BJ (cell line): ENCODE measurements at regions of chr9 and their contacts with region 1.

Region 1: GRCh38 chr9:35882263-35882848 is 12.2 kb upstream of the OR13J1 start:
- DNase-seq: peak; percentile 20
- H3K4me3 ChIP-seq: no peak overlapping the region
- H3K27me3 ChIP-seq: no peaks in the 10 kb centered on the region
- CTCF ChIP-seq: peak; percentile 99

Region 2: GRCh38 chr9:35790385-35791296 is 91.7 kb before region 1 on chr9:
- CTCF ChIA-PET with region 1: interaction called, 92 read pairs
- POLR2A ChIA-PET with region 1: no interaction called
- DNase-seq: peak; percentile 18
- H3K4me3 ChIP-seq: peak overlapping the region; percentile 61
- H3K27me3 ChIP-seq: peaks cover 2% of the 10 kb centered on the region; the same call in 1 of the 2 replicates
- CTCF ChIP-seq: peak; percentile 85

Region 3: GRCh38 chr9:35859310-35859989 is 22.9 kb before region 1 on chr9:
- CTCF ChIA-PET with region 1: interaction called, 21 read pairs
- POLR2A ChIA-PET with region 1: no interaction called
- DNase-seq: no peak
- H3K4me3 ChIP-seq: no peak overlapping the region
- H3K27me3 ChIP-seq: peaks cover 12% of the 10 kb centered on the region
- CTCF ChIP-seq: no peak

Region 4: DNA sequence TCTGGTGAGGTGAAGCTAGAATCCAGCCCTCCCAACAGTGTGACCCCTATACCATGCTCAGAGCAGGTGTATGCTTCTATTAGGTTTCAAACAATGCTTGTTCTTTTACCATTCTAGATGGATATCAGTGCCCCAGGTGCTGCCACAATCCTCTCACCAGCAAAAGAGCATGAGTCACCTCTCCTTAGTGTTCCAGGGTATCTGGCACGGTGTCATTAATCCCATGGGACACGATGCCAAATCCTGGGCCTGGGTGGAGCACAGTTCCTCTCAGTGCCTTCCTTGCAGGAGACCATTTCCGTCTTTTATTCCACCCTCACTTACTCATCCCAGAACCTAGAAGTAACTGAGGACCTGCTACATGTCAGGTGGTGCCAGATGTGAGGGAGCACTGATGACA is 10.9 kb before region 1 on chr9:
- CTCF ChIA-PET with region 1: interaction called, 23 read pairs
- POLR2A ChIA-PET with region 1: no interaction called
- DNase-seq: no peak
- H3K4me3 ChIP-seq: no peak overlapping the region
- H3K27me3 ChIP-seq: no peaks in the 10 kb centered on the region
- CTCF ChIP-seq: no peak

Region 5: DNA sequence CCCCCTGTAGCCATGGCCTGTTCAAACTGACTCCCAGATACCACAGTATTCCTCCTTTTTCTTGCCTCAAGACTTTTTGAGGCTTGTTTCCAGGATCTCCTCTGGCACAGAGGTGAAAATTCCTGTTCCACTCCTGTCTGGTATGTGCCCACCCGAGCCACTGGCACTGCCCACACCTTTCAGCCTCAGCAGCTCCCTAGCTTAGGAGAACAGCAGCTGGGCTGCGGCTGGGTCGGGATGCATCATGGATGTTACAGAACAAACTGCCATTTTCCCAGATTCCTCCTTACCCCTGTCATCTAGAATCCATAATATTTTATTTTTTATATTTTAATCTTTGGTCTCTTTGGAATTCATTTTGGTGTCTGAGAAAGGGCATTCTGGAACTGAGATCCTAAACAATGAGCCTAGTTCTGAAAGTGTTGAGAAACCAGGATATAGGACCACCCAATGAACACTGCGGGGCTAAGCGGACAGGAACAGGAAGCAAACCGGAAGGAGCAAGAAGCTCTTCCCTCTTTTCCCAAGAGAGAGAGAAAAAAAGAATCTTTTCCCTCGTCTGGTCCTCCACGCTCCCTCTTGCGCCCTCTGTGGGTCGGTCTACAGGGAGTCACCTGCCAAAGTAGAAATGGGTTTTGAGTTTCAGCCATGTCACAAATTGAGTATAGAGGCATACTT is 63.1 kb after region 1 on chr9:
- CTCF ChIA-PET with region 1: interaction called, 11 read pairs
- POLR2A ChIA-PET with region 1: no interaction called
- DNase-seq: peak; percentile 26
- H3K4me3 ChIP-seq: no peak overlapping the region
- H3K27me3 ChIP-seq: no peaks in the 10 kb centered on the region
- CTCF ChIP-seq: peak; percentile 92